ENCODE measurements at regions of chr1 and their contacts with region 1.

Region 1: DNA sequence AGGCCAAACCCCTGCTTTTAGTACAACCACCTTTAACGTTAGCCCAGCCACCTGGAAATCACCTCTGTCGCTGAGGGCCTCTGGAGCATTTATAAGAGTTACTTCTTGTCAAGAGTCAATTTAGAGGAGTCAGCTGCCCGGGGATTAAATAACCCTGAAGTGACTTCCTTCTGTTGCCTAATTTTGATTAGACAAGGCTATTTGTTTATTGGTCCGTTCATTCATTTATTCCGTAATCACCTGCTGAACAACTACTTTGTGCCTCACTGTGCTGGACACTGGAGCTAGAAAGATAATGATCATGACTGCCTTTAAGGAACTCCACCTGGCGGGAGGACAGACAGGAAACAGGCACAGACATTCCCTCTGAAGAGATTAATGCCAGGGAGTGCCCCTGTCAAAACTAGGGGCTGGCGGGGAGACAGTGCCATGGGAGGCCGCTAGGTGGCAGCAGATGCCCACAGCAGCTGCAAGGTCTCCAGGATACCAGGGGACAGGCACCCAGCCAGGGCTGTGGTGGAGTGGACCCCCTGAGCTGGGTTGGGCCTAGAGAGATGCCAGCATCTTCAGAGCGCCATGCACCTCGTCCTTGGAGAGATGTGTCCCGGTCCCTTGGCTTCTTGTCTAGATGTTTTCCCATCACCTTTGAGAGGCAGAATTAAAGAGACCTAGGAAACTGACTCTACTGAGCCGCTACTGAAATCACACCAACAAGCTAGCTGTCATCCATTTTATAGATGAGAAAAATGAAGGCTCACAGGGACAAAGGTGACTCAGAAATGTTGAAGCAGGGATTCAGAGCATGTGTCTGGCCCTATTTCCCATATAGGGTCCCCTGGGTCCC is 3.7 kb downstream of the REN start:
- DNase-seq: peak; percentile 91
- H3K4me3 ChIP-seq: peak overlapping the region in 1 of 2 experiments; percentile 20; a peak in 1 of 4 replicates
- H3K27ac ChIP-seq: no peak overlapping the region
- H3K4me1 ChIP-seq: no peaks in the 10 kb centered on the region; a peak in 1 of 4 replicates
- H3K27me3 ChIP-seq: no peaks in the 10 kb centered on the region; the same call in 1 of the 2 replicates
- CTCF ChIP-seq: peak; percentile 98
- EP300 ChIP-seq: no peak
- RAD21 ChIP-seq: peak; percentile 99

Region 2: GRCh38 chr1:203861379-203862184 is 300.9 kb before region 1 on chr1 and contains the start of gene SNRPE:
- CTCF ChIA-PET with region 1: interaction called, 16 read pairs
- POLR2A ChIA-PET with region 1: no interaction called
- DNase-seq: peak; percentile 90
- H3K4me3 ChIP-seq: peak within 1 kb of the TSS; percentile 73 to 83
- H3K27ac ChIP-seq: peak within 1 kb of the TSS; percentile 64 to 85
- H3K4me1 ChIP-seq: peaks cover 7 to 8% of the 10 kb centered on the region in 2 experiments; a peak in 3 of 4 replicates
- H3K27me3 ChIP-seq: no peaks in the 10 kb centered on the region
- CTCF ChIP-seq: peak; percentile 98
- EP300 ChIP-seq: no peak
- RAD21 ChIP-seq: peak; percentile 96
- polyA plus RNA-seq, gene SNRPE: 177 and 359 TPM in 2 replicates

Region 3: GRCh38 chr1:204151552-204152309 is 10.7 kb before region 1 on chr1 and contains the start of gene ETNK2:
- CTCF ChIA-PET with region 1: interaction called, 36 read pairs
- POLR2A ChIA-PET with region 1: no interaction called
- DNase-seq: peak; percentile 98
- H3K4me3 ChIP-seq: peak within 1 kb of the TSS; percentile 72 to 89
- H3K27ac ChIP-seq: peak within 1 kb of the TSS in 1 of 2 experiments; percentile 72; a peak in 1 of 4 replicates
- H3K4me1 ChIP-seq: peaks cover 3 to 19% of the 10 kb centered on the region in 2 experiments; a peak in 1 of 4 replicates
- H3K27me3 ChIP-seq: no peaks in the 10 kb centered on the region
- CTCF ChIP-seq: no peak
- EP300 ChIP-seq: no peak
- RAD21 ChIP-seq: no peak
- polyA plus RNA-seq, gene ETNK2: 16.1 and 20.1 TPM in 2 replicates

Region 4: DNA sequence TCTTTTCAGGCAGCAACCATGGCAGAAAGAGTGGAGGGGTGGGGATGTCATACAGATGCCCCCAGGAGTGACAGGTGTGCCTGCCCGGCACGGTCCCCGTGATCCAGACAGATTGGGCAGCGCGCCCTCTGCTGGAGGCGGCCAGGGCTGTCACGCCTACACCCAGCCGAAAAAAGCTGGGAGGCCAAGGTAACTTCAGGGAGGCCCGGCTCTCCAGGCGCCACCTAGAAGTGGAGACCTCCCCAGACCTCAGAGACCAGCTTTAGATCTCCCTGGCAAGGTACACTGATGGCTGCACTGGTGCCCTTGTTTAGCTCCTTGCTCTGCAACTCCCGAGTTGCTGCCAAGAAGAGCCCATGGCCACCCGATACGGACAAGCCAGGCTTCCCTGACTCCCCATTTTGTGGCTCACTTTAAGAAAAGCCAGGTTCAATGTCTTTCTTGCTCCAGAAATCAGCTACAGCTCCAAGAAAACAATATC is 44.7 kb after region 1 on chr1:
- CTCF ChIA-PET with region 1: interaction called, 157 read pairs
- POLR2A ChIA-PET with region 1: no interaction called
- DNase-seq: peak; percentile 86
- H3K4me3 ChIP-seq: no peak overlapping the region; a peak in 1 of 4 replicates
- H3K27ac ChIP-seq: no peak overlapping the region
- H3K4me1 ChIP-seq: peaks cover 0 to 3% of the 10 kb centered on the region in 2 experiments; a peak in 1 of 4 replicates
- H3K27me3 ChIP-seq: peaks cover 6% of the 10 kb centered on the region; the same call in 1 of the 2 replicates
- CTCF ChIP-seq: peak; percentile 90
- EP300 ChIP-seq: no peak
- RAD21 ChIP-seq: peak; percentile 50

Region 5: GRCh38 chr1:204363335-204364124 is 201.1 kb after region 1 on chr1:
- CTCF ChIA-PET with region 1: interaction called, 302 read pairs
- POLR2A ChIA-PET with region 1: no interaction called
- DNase-seq: peak; percentile 74
- H3K4me3 ChIP-seq: peak overlapping the region; percentile 41 to 56
- H3K27ac ChIP-seq: peak overlapping the region in 1 of 2 experiments; percentile 56; a peak in 1 of 4 replicates
- H3K4me1 ChIP-seq: peaks cover 4 to 25% of the 10 kb centered on the region in 2 experiments; a peak in 1 of 4 replicates
- H3K27me3 ChIP-seq: peaks cover 7% of the 10 kb centered on the region; the same call in 1 of the 2 replicates
- CTCF ChIP-seq: peak; percentile 98
- EP300 ChIP-seq: no peak
- RAD21 ChIP-seq: peak; percentile 97

Region 6: GRCh38 chr1:204390751-204391466 is 228.5 kb after region 1 on chr1:
- CTCF ChIA-PET with region 1: interaction called, 135 read pairs
- POLR2A ChIA-PET with region 1: no interaction called
- DNase-seq: no peak
- H3K4me3 ChIP-seq: no peak overlapping the region
- H3K27ac ChIP-seq: no peak overlapping the region
- H3K4me1 ChIP-seq: peaks cover 0 to 2% of the 10 kb centered on the region in 2 experiments; a peak in 1 of 4 replicates
- H3K27me3 ChIP-seq: no peaks in the 10 kb centered on the region
- CTCF ChIP-seq: no peak
- EP300 ChIP-seq: no peak
- RAD21 ChIP-seq: no peak

Region 7: DNA sequence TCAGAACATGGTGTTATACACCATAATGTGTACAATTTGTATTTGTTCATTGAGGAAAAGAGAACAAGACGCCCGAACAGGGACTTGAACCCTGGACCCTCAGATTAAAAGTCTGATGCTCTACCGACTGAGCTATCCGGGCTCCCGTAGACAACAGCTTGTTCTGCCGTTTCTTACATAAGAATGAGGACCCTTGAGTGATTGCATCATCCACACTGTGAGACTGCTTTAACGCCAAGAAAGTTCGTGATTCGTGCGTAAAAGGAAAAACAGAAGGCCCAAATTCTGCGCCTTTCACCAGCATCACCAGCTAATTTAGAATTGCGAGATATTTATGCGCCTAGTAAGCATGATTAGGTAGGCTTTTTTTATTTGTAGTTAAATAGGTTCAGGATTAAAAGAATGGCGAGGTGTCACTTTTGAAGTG is 344.5 kb after region 1 on chr1:
- CTCF ChIA-PET with region 1: interaction called, 11 read pairs
- POLR2A ChIA-PET with region 1: no interaction called
- DNase-seq: peak; percentile 43
- H3K4me3 ChIP-seq: peak overlapping the region; percentile 44 to 72
- H3K27ac ChIP-seq: peak overlapping the region; percentile 92 to 95
- H3K4me1 ChIP-seq: peaks cover 3 to 5% of the 10 kb centered on the region in 2 experiments; a peak in 2 of 4 replicates
- H3K27me3 ChIP-seq: no peaks in the 10 kb centered on the region
- CTCF ChIP-seq: no peak
- EP300 ChIP-seq: peak in 1 of 2 experiments; percentile 62; a peak in 1 of 4 replicates
- RAD21 ChIP-seq: no peak